CD8-positive, alpha-beta T cell (primary cell): ENCODE measurements at regions of chr17 and their contacts with region 1.

Region 1: GRCh38 chr17:42378597-42379594 is 9.3 kb downstream of the STAT3 start:
- DNase-seq: peak in 1 of 9 experiments; percentile 44
- ATAC-seq: peak; percentile 67
- H3K4me3 ChIP-seq: peak overlapping the region; percentile 18 to 30
- H3K4me3 Mint-ChIP-seq: peak overlapping the region; percentile 82
- H3K27ac ChIP-seq: peak overlapping the region in 1 of 2 experiments; percentile 55
- H3K27ac Mint-ChIP-seq: peak overlapping the region; percentile 85
- H3K4me1 ChIP-seq: peaks cover 27% of the 10 kb centered on the region
- H3K4me1 Mint-ChIP-seq: peaks cover 68% of the 10 kb centered on the region
- H3K27me3 ChIP-seq: no peaks in the 10 kb centered on the region
- H3K27me3 Mint-ChIP-seq: no peaks in the 10 kb centered on the region
- CTCF ChIP-seq: no peak

Region 2: GRCh38 chr17:42354956-42355843 is 23.7 kb before region 1 on chr17:
- CTCF ChIA-PET with region 1: no interaction called
- POLR2A ChIA-PET with region 1: interaction called, 4 read pairs
- intact Hi-C with region 1: loop called in 1 of 2 experiments (anchors 1 kb)
- DNase-seq: no peak
- ATAC-seq: no peak
- H3K4me3 ChIP-seq: no peak overlapping the region
- H3K4me3 Mint-ChIP-seq: no peak overlapping the region
- H3K27ac ChIP-seq: no peak overlapping the region
- H3K27ac Mint-ChIP-seq: no peak overlapping the region
- H3K4me1 ChIP-seq: peaks cover 15% of the 10 kb centered on the region
- H3K4me1 Mint-ChIP-seq: peaks cover 43% of the 10 kb centered on the region
- H3K27me3 ChIP-seq: no peaks in the 10 kb centered on the region
- H3K27me3 Mint-ChIP-seq: no peaks in the 10 kb centered on the region
- CTCF ChIP-seq: no peak